ENCODE measurements at regions of chr7 and their contacts with region 1.

Region 1: DNA sequence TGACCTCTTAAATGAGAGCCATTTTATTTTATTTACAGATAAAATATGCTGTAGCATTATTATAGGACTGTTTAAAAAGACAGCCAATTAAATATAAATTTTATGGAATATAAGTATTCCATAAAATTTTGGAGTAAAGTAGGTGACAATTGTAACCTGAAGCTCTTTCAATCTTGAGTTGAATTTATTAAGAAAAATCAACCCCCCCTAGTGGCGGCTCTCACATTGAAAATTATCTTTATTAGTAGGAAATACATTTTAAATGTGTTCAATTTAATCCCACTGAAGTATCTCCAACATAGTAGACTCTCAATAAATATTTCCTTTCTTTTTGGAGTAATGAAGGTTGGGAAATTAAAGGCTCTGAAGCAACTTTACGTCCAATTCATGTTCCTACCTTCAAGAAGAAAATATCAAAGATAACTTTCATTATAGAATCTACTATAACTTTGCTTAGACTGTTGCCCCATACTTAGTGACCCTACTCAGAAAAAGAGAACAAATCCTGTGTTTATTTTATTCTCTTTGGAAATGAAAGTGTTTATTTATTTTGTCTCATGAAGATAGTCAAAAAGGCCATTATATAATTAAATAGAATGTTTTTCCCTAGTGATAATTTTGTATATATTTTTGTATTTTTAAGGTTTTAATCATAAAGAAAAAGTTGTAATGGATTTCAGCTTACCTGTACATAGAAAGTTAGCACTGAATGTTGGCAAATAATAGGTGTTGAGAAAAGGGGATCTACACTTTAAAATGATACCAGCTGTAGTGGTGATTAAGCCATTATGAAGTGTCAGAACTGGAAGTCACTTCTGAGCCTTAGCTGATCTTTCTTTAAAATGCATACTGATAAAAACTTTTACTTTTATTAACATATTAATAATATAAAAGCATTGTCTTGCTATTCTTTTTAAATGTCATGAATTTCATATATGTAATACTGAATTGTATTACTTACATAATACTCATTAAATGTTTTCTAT is 3.3 kb downstream of the AHR start:
- DNase-seq: peak in 4 of 6 donors; percentile 9 to 39 (median 12)
- ATAC-seq: no peak
- H3K4me3 ChIP-seq: peak overlapping the region in 2 of 4 donors; percentile 0 to 95
- H3K27ac ChIP-seq: peak overlapping the region in 1 of 4 donors; percentile 13
- H3K4me1 ChIP-seq: peaks cover 12 to 37% (median 35%) of the 10 kb centered on the region in 3 donors
- H3K27me3 ChIP-seq: no peaks in the 10 kb centered on the region
- CTCF ChIP-seq: peak; percentile 10 to 67 (median 55)

Region 2: GRCh38 chr7:16982640-16983350 is 319.0 kb before region 1 on chr7:
- intact Hi-C with region 1: loop called in 1 of 3 experiments (anchors 10 kb)
- DNase-seq: peak in 2 of 6 donors; percentile 3 to 22
- ATAC-seq: peak in 3 of 4 donors; percentile 79 to 91 (median 80)
- H3K4me3 ChIP-seq: no peak overlapping the region
- H3K27ac ChIP-seq: no peak overlapping the region
- H3K4me1 ChIP-seq: peaks cover 0 to 18% (median 8%) of the 10 kb centered on the region in 3 donors
- H3K27me3 ChIP-seq: no peaks in the 10 kb centered on the region
- CTCF ChIP-seq: peak; percentile 72 to 90 (median 86)

Region 3: DNA sequence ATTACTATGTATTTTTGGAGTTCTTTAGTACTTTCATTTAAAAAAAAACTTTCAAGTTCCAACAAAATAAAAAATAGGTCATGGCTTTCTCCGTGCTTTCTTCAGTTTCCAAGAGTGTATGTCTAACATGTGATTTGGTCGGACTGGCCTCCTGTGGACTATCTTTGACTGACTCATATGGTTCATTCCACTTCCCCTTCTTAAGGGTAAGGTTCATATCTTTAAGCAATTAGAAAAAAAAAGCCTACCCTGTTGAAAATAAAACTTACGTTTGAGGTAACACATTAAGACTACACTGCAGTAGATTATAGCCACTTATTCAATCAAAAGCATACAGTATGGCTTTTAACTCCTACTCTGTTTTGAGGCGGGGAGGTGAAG is 116.1 kb before region 1 on chr7:
- intact Hi-C with region 1: no loop called
- DNase-seq: no peak
- ATAC-seq: peak in 3 of 4 donors; percentile 49 to 71 (median 52)
- H3K4me3 ChIP-seq: no peak overlapping the region
- H3K27ac ChIP-seq: no peak overlapping the region
- H3K4me1 ChIP-seq: peaks cover 0 to 10% (median 0%) of the 10 kb centered on the region in 3 donors
- H3K27me3 ChIP-seq: no peaks in the 10 kb centered on the region
- CTCF ChIP-seq: no peak

Measured in pancreas (tissue), 10 donors.